Natural killer cell (primary cell): ENCODE measurements at regions of chr18 and their contacts with region 1.

Region 1: GRCh38 chr18:25561918-25562317 is 210.0 kb upstream of the ZNF521 start:
- DNase-seq: peak in 1 of 2 donors; percentile 20
- ATAC-seq: peak in 1 of 3 donors; percentile 63
- H3K4me3 ChIP-seq: no peak overlapping the region
- H3K4me3 Mint-ChIP-seq: no peak overlapping the region
- H3K27ac ChIP-seq: no peak overlapping the region
- H3K27ac Mint-ChIP-seq: no peak overlapping the region
- H3K4me1 ChIP-seq: no peaks in the 10 kb centered on the region
- H3K4me1 Mint-ChIP-seq: no peaks in the 10 kb centered on the region
- H3K27me3 ChIP-seq: no peaks in the 10 kb centered on the region
- H3K27me3 Mint-ChIP-seq: peaks cover 0 to 10% of the 10 kb centered on the region in 2 donors
- CTCF ChIP-seq: peak; percentile 29

Region 2: DNA sequence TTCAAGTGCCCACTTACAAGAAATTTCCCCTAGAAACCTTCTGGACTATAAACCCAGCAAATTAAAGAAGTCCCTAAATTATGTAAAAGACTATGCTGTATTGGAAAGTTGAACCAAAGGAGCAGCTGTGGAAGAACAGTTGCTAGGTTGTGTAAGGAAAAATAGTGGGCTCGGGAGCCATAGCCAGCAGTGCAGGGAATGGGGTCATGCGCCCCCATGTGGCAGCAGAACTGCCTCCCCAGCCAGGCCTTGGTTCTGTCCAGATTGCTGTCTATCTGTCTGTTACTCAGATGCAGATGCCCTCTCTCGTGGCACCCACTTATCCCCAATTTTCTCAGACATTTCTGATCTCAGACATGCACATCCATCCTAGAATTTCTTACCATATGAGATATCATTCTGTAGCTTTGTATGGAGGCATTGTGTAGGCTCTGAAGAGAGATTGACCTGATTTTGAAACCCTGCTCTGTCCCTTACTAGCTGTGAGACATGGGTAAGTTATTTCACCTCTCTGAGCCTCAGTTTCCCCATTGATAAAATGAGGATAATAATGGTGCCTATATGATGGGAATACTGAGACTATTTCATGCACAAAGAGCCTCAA is 270.2 kb after region 1 on chr18:
- intact Hi-C with region 1: loop called (anchors 5 kb)
- DNase-seq: peak in 1 of 2 donors; percentile 13
- ATAC-seq: peak in 1 of 3 donors; percentile 75
- H3K4me3 ChIP-seq: no peak overlapping the region
- H3K4me3 Mint-ChIP-seq: no peak overlapping the region
- H3K27ac ChIP-seq: no peak overlapping the region
- H3K27ac Mint-ChIP-seq: no peak overlapping the region
- H3K4me1 ChIP-seq: no peaks in the 10 kb centered on the region
- H3K4me1 Mint-ChIP-seq: no peaks in the 10 kb centered on the region
- H3K27me3 ChIP-seq: no peaks in the 10 kb centered on the region
- H3K27me3 Mint-ChIP-seq: peaks cover 0 to 4% of the 10 kb centered on the region in 2 donors
- CTCF ChIP-seq: peak; percentile 39

Region 3: DNA sequence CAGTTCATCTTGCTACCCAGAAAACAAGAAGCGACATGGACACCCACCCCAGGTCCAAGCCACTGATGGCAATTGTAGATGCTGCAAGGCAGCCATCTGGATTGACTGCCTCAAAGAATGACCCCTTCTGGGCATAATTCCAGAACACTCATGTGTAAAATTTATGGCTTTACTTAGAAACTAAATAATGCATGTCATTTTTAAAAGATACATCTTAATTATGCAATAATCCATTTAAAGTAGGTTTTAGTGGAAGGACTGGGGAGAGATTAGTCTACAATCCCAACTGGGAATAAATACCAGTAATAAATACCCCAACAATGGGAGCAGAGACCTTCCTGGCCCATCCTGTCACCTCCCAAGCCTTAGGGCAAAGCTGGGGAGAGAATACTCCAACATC is 280.7 kb after region 1 on chr18:
- intact Hi-C with region 1: no loop called
- DNase-seq: no peak
- ATAC-seq: no peak
- H3K4me3 ChIP-seq: no peak overlapping the region
- H3K4me3 Mint-ChIP-seq: no peak overlapping the region
- H3K27ac ChIP-seq: no peak overlapping the region
- H3K27ac Mint-ChIP-seq: no peak overlapping the region
- H3K4me1 ChIP-seq: peaks cover 3% of the 10 kb centered on the region
- H3K4me1 Mint-ChIP-seq: peaks cover 11 to 26% of the 10 kb centered on the region in 2 donors
- H3K27me3 ChIP-seq: no peaks in the 10 kb centered on the region
- H3K27me3 Mint-ChIP-seq: peaks cover 0 to 8% of the 10 kb centered on the region in 2 donors
- CTCF ChIP-seq: no peak

Region 4: DNA sequence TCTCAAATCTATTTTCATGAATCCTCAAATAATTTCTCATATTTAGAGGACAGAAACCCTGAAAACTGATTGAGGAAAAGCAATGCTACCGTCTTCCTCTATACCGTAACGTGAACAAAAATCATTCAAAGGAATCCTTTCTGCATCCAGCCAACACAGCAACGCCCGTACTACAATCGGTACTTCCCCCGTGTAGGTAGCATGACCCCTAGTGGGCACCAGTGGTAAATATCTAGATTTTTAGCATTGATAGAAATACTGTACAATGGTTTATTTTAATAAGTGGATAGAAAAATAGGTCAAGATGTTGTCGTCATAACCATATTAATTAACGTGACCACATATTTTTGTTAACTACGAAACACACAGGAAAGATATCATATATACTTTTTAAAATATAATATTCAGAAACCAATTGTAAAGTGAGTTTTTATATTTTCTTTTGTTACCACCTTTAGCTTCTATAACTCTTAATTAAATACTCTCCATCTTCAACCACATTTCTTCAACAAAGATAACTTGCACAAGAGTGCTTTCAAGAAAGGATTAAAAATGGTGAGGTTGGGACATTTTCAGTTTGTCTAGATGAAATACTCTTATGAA is 334.4 kb after region 1 on chr18:
- intact Hi-C with region 1: loop called (anchors 5 kb)
- DNase-seq: peak in 1 of 2 donors; percentile 44
- ATAC-seq: peak in 2 of 3 donors; percentile 59 to 87
- H3K4me3 ChIP-seq: no peak overlapping the region
- H3K4me3 Mint-ChIP-seq: no peak overlapping the region
- H3K27ac ChIP-seq: no peak overlapping the region
- H3K27ac Mint-ChIP-seq: no peak overlapping the region
- H3K4me1 ChIP-seq: no peaks in the 10 kb centered on the region
- H3K4me1 Mint-ChIP-seq: peaks cover 0 to 5% of the 10 kb centered on the region in 2 donors
- H3K27me3 ChIP-seq: no peaks in the 10 kb centered on the region
- H3K27me3 Mint-ChIP-seq: peaks cover 0 to 16% of the 10 kb centered on the region in 2 donors
- CTCF ChIP-seq: peak; percentile 74

Region 5: DNA sequence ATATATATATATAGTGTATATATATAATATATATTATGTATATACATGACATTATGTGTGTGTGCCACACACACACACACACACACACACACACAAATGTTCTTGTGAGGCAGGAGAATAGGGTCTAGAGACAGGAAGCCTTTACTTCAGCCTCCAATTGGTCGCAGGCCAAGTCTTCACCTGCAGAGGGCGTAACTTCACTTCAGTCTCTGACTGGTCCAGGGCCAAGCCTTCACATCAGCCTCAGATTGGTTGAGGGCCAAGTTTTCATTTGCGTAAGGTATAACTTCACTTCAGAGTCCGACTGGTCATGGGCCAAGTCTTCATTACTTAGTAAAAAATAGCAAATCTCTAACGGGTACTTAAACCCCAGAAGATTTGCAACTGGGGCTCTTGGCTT is 541.7 kb after region 1 on chr18:
- intact Hi-C with region 1: no loop called
- DNase-seq: peak in 1 of 2 donors; percentile 66
- ATAC-seq: peak in 1 of 3 donors; percentile 54
- H3K4me3 ChIP-seq: no peak overlapping the region
- H3K4me3 Mint-ChIP-seq: no peak overlapping the region
- H3K27ac ChIP-seq: no peak overlapping the region
- H3K27ac Mint-ChIP-seq: no peak overlapping the region
- H3K4me1 ChIP-seq: no peaks in the 10 kb centered on the region
- H3K4me1 Mint-ChIP-seq: no peaks in the 10 kb centered on the region
- H3K27me3 ChIP-seq: no peaks in the 10 kb centered on the region
- H3K27me3 Mint-ChIP-seq: peaks cover 9 to 32% of the 10 kb centered on the region in 2 donors
- CTCF ChIP-seq: no peak